ENCODE measurements at regions of chr18 and their contacts with region 1.

Region 1: GRCh38 chr18:61575419-61575818 is 242.2 kb downstream of the CDH20 start:
- DNase-seq: no peak
- ATAC-seq: no peak
- H3K4me3 ChIP-seq: no peak overlapping the region
- H3K27ac ChIP-seq: no peak overlapping the region
- H3K4me1 ChIP-seq: no peaks in the 10 kb centered on the region
- H3K27me3 ChIP-seq: no peaks in the 10 kb centered on the region
- CTCF ChIP-seq: no peak

Region 2: DNA sequence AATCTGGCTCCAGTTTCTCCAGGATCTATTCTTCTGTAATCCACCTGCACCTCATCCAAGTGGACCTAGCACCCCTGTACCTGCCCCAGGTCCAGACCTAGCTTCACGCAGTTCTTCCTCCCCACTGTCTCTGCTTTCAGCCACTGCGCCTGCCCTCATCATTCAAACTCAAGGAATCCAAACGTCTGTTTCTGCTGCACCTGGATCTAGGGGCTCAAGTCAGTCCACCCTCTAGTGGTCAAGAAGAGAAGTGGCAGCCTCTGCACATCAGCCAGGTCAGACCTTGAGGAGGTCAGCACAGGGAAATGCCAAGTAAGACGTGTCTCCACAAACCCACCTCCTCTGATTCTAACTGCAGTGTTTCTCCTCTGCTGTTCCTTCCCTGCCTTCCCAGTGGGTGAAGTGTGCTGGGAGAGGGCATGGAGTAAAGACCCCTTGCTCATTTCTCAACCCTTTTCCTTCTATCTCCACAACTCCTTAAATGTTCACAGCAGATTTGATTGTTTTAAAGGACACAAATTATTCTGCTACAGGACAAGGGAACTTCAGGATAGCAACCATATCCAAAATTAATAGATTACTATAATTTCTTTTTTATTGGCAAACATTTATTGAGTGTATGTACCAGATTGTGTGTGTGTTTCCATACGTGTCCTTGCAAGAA is 326.0 kb after region 1 on chr18:
- intact Hi-C with region 1: loop called (anchors 10 kb)
- DNase-seq: no peak
- ATAC-seq: peak; percentile 88 to 92
- H3K4me3 ChIP-seq: no peak overlapping the region
- H3K27ac ChIP-seq: no peak overlapping the region
- H3K4me1 ChIP-seq: no peaks in the 10 kb centered on the region
- H3K27me3 ChIP-seq: no peaks in the 10 kb centered on the region
- CTCF ChIP-seq: peak; percentile 92

Measured in lower lobe of right lung (tissue), 2 donors.